SK-N-SH (cell line): ENCODE measurements at regions of chr9 and their contacts with region 1.

Region 1: GRCh38 chr9:35882263-35882848 is 12.2 kb upstream of the OR13J1 start:
- DNase-seq: peak; percentile 83
- H3K4me3 ChIP-seq: no peak overlapping the region; a peak in 1 of 4 replicates
- H3K27ac ChIP-seq: no peak overlapping the region
- H3K4me1 ChIP-seq: no peaks in the 10 kb centered on the region; a peak in 1 of 4 replicates
- H3K27me3 ChIP-seq: no peaks in the 10 kb centered on the region
- CTCF ChIP-seq: peak; percentile 99
- EP300 ChIP-seq: no peak
- RAD21 ChIP-seq: peak; percentile 84

Region 2: GRCh38 chr9:34983209-34983608 is 899.1 kb before region 1 on chr9:
- CTCF ChIA-PET with region 1: no interaction called
- POLR2A ChIA-PET with region 1: no interaction called
- DNase-seq: no peak
- H3K4me3 ChIP-seq: no peak overlapping the region
- H3K27ac ChIP-seq: no peak overlapping the region
- H3K4me1 ChIP-seq: peaks cover 0 to 29% of the 10 kb centered on the region in 2 experiments; a peak in 1 of 4 replicates
- H3K27me3 ChIP-seq: peaks cover 6% of the 10 kb centered on the region
- CTCF ChIP-seq: no peak
- EP300 ChIP-seq: no peak
- RAD21 ChIP-seq: no peak

Region 3: DNA sequence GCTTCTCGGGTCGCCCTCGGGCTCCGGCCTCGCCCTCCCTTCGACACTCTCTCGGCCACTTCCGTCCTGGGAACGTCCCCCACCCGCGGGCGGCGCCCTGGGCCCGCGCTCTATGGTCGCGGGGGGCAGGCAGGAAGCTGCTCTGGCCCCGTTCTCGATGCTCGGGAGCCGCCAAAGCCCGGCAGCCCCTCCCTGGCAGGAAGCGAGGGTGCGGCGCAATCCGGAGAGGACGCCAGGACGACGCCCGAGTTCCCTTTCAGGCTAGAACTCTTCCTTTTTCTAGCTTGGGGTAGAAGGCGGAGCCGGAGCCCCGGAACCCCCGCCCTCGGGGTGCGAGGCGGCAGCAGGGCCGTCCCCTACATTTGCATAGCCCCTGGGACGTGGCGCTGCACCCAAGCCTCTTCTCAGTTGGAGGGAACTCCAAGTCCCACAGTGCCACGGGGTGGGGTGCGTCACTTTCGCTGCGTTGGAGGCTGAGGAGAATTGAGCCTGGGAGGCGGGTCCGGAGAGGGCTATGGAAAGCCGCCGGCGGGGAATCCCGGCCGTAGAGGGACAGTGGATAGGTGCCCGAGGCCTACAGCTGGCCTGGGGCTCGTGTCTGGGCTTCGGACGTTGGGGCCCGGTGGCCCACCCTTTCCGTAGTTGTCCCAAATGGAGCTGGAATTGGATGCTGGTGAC is 150.1 kb before region 1 on chr9 and contains the starts of genes CREB3 and TLN1:
- CTCF ChIA-PET with region 1: interaction called, 10 read pairs
- POLR2A ChIA-PET with region 1: no interaction called
- DNase-seq: peak; percentile 97
- H3K4me3 ChIP-seq: peak within 1 kb of the TSS; percentile 89 to 96
- H3K27ac ChIP-seq: peak within 1 kb of the TSS; percentile 88 to 94
- H3K4me1 ChIP-seq: peaks cover 34 to 49% of the 10 kb centered on the region in 2 experiments
- H3K27me3 ChIP-seq: no peaks in the 10 kb centered on the region
- CTCF ChIP-seq: peak; percentile 22; the same call in 1 of the 2 replicates
- EP300 ChIP-seq: peak in 1 of 2 experiments; percentile 62; a peak in 1 of 4 replicates
- RAD21 ChIP-seq: no peak
- polyA plus RNA-seq, gene CREB3: 33.9 and 38.6 TPM in 2 replicates
- polyA plus RNA-seq, gene TLN1: 91.8 and 115 TPM in 2 replicates

Region 4: GRCh38 chr9:35790385-35791296 is 91.7 kb before region 1 on chr9:
- CTCF ChIA-PET with region 1: interaction called, 136 read pairs
- POLR2A ChIA-PET with region 1: no interaction called
- DNase-seq: peak; percentile 92
- H3K4me3 ChIP-seq: no peak overlapping the region
- H3K27ac ChIP-seq: no peak overlapping the region
- H3K4me1 ChIP-seq: peaks cover 0 to 12% of the 10 kb centered on the region in 2 experiments; a peak in 1 of 4 replicates
- H3K27me3 ChIP-seq: no peaks in the 10 kb centered on the region
- CTCF ChIP-seq: peak; percentile 86
- EP300 ChIP-seq: no peak
- RAD21 ChIP-seq: peak; percentile 95

Region 5: DNA sequence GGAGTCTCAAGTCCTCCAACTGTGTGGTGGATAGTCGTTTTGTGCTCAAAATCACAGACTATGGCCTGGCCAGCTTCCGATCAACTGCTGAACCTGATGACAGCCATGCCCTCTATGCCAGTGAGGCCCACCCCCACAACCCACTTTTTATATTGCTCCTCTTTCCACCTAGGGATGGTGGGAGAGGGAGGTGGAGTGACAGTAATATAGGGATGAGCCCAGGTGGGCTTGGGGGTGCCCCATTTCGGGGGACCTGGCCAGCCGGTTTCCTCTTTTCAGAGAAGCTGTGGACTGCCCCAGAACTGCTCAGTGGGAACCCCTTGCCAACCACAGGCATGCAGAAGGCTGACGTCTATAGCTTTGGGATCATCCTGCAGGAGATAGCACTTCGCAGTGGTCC is 76.8 kb before region 1 on chr9:
- CTCF ChIA-PET with region 1: interaction called, 11 read pairs
- POLR2A ChIA-PET with region 1: no interaction called
- DNase-seq: no peak
- H3K4me3 ChIP-seq: no peak overlapping the region
- H3K27ac ChIP-seq: no peak overlapping the region
- H3K4me1 ChIP-seq: no peaks in the 10 kb centered on the region
- H3K27me3 ChIP-seq: no peaks in the 10 kb centered on the region
- CTCF ChIP-seq: no peak
- EP300 ChIP-seq: no peak
- RAD21 ChIP-seq: no peak

Region 6: DNA sequence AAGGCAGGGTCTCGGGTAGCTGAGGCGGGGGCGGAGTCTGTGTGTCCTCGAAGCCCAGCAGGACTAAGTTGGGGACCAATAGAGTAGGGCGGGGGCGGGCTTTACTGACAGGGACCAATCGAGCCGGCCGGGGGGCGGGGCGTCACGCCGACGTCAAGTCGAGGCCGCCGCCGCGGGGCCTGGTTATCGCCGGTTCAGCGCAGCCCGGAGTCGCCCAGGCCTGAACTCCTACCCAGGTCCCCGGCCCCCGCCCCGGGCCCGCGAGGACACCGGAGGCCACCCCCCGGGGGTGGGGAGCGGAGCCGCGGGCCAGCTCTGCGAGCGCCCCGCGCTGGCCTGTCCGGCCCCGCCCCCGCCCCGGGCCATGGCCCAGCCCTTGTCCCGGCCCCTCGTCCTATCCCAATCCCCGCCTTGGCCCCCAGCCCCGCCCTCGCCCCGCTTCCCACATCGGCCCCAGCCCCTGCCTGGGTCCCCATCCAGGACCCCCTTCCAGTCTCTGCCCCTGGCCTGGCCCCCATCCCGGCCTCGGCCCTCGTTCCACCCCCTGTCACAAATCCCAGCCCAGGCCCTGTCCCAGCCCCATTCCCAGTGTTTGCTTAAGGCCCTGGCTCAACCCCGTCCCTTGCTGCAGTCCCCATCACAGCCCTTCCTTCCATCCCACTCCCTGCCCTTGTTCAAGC is 53.1 kb before region 1 on chr9 and contains the start of gene TMEM8B:
- CTCF ChIA-PET with region 1: interaction called, 33 read pairs
- POLR2A ChIA-PET with region 1: no interaction called
- DNase-seq: peak; percentile 97
- H3K4me3 ChIP-seq: peak within 1 kb of the TSS; percentile 56 to 80
- H3K27ac ChIP-seq: peak within 1 kb of the TSS; percentile 46 to 56; a peak in 3 of 4 replicates
- H3K4me1 ChIP-seq: peaks cover 7 to 25% of the 10 kb centered on the region in 2 experiments; a peak in 1 of 4 replicates
- H3K27me3 ChIP-seq: no peaks in the 10 kb centered on the region
- CTCF ChIP-seq: no peak
- EP300 ChIP-seq: no peak
- RAD21 ChIP-seq: no peak
- polyA plus RNA-seq, gene TMEM8B: 5.3 and 5.8 TPM in 2 replicates

Region 7: GRCh38 chr9:35859310-35859989 is 22.9 kb before region 1 on chr9:
- CTCF ChIA-PET with region 1: interaction called, 13 read pairs
- POLR2A ChIA-PET with region 1: no interaction called
- DNase-seq: peak; percentile 51
- H3K4me3 ChIP-seq: no peak overlapping the region
- H3K27ac ChIP-seq: no peak overlapping the region
- H3K4me1 ChIP-seq: peaks cover 0 to 9% of the 10 kb centered on the region in 2 experiments; a peak in 1 of 4 replicates
- H3K27me3 ChIP-seq: no peaks in the 10 kb centered on the region; the same call in 1 of the 2 replicates
- CTCF ChIP-seq: no peak
- EP300 ChIP-seq: no peak
- RAD21 ChIP-seq: no peak

Region 8: GRCh38 chr9:35903049-35903448 is 20.7 kb after region 1 on chr9:
- CTCF ChIA-PET with region 1: interaction called, 17 read pairs
- POLR2A ChIA-PET with region 1: no interaction called
- DNase-seq: peak; percentile 72
- H3K4me3 ChIP-seq: peak overlapping the region in 1 of 2 experiments; percentile 3; a peak in 1 of 4 replicates
- H3K27ac ChIP-seq: no peak overlapping the region
- H3K4me1 ChIP-seq: peaks cover 30% of the 10 kb centered on the region in 2 experiments; a peak in 3 of 4 replicates
- H3K27me3 ChIP-seq: no peaks in the 10 kb centered on the region
- CTCF ChIP-seq: peak; percentile 81
- EP300 ChIP-seq: no peak
- RAD21 ChIP-seq: peak; percentile 80

Region 9: GRCh38 chr9:36008774-36009300 is 126.5 kb after region 1 on chr9:
- CTCF ChIA-PET with region 1: no interaction called
- POLR2A ChIA-PET with region 1: no interaction called
- DNase-seq: peak; percentile 77
- H3K4me3 ChIP-seq: peak overlapping the region in 1 of 2 experiments; percentile 48; a peak in 1 of 4 replicates
- H3K27ac ChIP-seq: no peak overlapping the region
- H3K4me1 ChIP-seq: no peaks in the 10 kb centered on the region; a peak in 1 of 4 replicates
- H3K27me3 ChIP-seq: no peaks in the 10 kb centered on the region
- CTCF ChIP-seq: peak; percentile 98
- EP300 ChIP-seq: no peak
- RAD21 ChIP-seq: peak; percentile 85

Region 10: GRCh38 chr9:36136272-36136893 is 254.0 kb after region 1 on chr9 and contains the start of gene GLIPR2:
- CTCF ChIA-PET with region 1: no interaction called
- POLR2A ChIA-PET with region 1: no interaction called
- DNase-seq: peak; percentile 92
- H3K4me3 ChIP-seq: peak within 1 kb of the TSS; percentile 67 to 83
- H3K27ac ChIP-seq: no peak within 1 kb of the TSS; a peak in 1 of 4 replicates
- H3K4me1 ChIP-seq: peaks cover 0 to 21% of the 10 kb centered on the region in 2 experiments; a peak in 3 of 4 replicates
- H3K27me3 ChIP-seq: no peaks in the 10 kb centered on the region
- CTCF ChIP-seq: peak; percentile 40
- EP300 ChIP-seq: no peak
- RAD21 ChIP-seq: no peak; the same call in 1 of the 2 replicates
- polyA plus RNA-seq, gene GLIPR2: 38.3 and 40.1 TPM in 2 replicates